ENCODE measurements at regions of chr6 and their contacts with region 1.

Region 1: DNA sequence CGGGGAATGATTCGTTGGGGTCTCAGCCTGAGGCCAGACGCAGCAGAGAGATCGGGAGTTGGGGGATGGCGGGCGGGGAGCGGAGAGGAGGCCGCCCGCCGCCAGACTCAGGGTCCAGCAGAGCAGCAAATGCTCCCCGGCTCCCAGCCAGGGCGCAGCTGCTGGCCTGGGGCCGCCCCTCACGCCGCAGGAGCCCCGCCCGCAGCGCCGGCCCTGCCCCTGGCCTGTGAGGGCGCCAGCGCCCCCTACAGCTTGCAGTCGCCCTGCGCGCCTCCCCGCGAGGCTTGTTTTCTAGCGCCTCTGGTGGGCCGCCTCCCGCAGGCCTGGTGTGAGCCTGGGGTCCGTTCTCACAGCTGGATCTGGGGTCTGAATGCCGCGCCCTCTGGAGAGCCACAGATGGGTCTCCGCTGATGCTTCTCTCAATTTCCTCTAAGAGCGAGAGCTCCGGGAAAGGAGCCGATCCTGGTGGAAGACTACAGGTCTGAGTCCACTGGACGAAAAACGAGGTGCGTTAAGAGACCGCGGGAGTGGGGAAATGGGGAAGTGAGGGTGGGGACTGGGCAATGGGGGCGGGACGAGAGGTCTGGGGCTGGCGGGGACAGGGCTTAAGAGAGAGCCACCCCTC is 29.9 kb downstream of the TRIM38 start:
- DNase-seq: peak; percentile 96
- H3K4me3 ChIP-seq: peak overlapping the region; percentile 42 to 82 (median 81)
- H3K27ac ChIP-seq: peak overlapping the region; percentile 82
- H3K4me1 ChIP-seq: peaks cover 13% of the 10 kb centered on the region
- H3K27me3 ChIP-seq: no peaks in the 10 kb centered on the region
- CTCF ChIP-seq: peak; percentile 99 to 100
- POLR2A ChIP-seq: peak; percentile 96

Region 2: GRCh38 chr6:24720604-24721460 is 1271.7 kb before region 1 on chr6:
- CTCF ChIA-PET with region 1: no interaction called
- POLR2A ChIA-PET with region 1: no interaction called
- dilution Hi-C with region 1: no loop called
- intact Hi-C with region 1: loop called (anchors 10 kb)
- DNase-seq: peak; percentile 100
- H3K4me3 ChIP-seq: peak overlapping the region; percentile 81 to 89 (median 86)
- H3K27ac ChIP-seq: peak overlapping the region; percentile 97
- H3K4me1 ChIP-seq: peaks cover 34% of the 10 kb centered on the region
- H3K27me3 ChIP-seq: no peaks in the 10 kb centered on the region
- CTCF ChIP-seq: no peak
- POLR2A ChIP-seq: peak; percentile 98

Region 3: DNA sequence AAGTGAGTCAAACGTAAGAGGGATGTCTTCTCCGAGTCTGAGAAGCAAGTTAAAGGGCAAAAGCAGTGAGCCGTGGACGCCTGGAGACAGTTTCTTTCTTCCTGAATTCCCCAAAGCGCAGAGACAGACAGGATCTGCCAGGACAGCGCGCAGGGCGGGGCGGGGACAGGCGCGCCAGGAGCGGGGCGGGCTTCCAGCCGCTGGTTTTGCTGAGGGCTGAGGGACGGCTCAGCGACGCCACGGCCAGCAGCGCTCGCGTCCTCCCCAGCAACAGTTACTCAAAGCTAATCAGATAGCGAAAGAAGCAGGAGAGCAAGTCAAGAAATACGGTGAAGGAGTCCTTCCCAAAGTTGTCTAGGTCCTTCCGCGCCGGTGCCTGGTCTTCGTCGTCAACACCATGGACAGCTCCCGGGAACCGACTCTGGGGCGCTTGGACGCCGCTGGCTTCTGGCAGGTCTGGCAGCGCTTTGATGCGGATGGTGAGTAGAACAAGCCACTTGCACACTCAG is 340.5 kb before region 1 on chr6 and contains the start of gene SCGN:
- CTCF ChIA-PET with region 1: no interaction called
- POLR2A ChIA-PET with region 1: no interaction called
- dilution Hi-C with region 1: no loop called
- intact Hi-C with region 1: no loop called
- DNase-seq: peak; percentile 52
- H3K4me3 ChIP-seq: no peak within 1 kb of the TSS
- H3K27ac ChIP-seq: no peak within 1 kb of the TSS
- H3K4me1 ChIP-seq: no peaks in the 10 kb centered on the region
- H3K27me3 ChIP-seq: peaks cover 0 to 8% of the 10 kb centered on the region in 2 experiments
- CTCF ChIP-seq: no peak
- POLR2A ChIP-seq: no peak
- total RNA-seq, gene SCGN: not detected in 2 replicates

Region 4: DNA sequence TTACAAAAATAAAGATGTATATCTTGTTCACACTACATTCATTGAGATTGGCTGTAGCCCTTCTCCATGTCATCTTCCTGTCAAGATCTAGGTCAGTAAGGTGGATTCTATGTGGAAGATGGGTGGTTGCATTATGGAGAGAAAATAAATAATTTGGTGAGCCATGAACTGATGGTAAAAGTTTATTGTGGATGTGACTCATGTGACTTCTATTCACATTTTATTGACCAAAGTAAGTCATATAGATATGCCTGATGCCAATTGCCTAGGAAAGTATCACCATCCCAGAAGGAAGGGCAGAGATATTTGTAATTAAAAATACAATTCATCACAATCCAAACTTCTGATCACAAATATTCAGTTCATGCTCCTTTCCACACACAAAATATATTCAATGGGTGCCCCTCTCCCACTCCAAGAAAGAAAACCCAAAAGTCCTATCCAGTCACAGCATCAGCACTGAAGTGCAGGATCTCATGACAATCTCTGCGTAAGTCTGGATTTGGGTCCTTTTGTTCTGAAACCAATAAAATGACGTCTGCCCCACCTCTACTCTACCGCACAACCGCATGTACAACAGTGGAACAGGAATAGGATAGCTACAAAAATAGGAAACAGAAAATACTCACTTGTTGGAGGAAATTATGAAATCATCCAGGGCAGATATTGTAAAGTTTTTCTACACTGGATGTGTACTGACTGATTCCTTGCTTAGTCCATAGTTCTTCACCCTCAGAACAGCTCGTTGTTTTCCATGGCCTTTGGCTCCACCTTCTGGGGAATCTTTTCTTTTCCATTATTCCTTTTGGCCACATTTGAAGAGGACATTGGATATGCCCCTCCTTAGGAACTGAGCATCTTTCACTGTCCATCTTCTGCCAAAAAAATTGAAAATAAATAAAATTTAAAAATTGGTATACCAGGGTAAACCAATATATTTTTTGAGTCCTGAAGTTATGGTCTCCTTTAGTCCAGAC is 102.4 kb before region 1 on chr6:
- CTCF ChIA-PET with region 1: no interaction called
- POLR2A ChIA-PET with region 1: no interaction called
- dilution Hi-C with region 1: no loop called
- intact Hi-C with region 1: loop called (anchors 5 kb)
- DNase-seq: peak; percentile 73
- H3K4me3 ChIP-seq: no peak overlapping the region
- H3K27ac ChIP-seq: no peak overlapping the region
- H3K4me1 ChIP-seq: no peaks in the 10 kb centered on the region
- H3K27me3 ChIP-seq: peaks cover 0 to 1% of the 10 kb centered on the region in 2 experiments
- CTCF ChIP-seq: peak; percentile 16 to 17
- POLR2A ChIP-seq: no peak

Region 5: GRCh38 chr6:25971187-25971811 is 21.2 kb before region 1 on chr6:
- CTCF ChIA-PET with region 1: interaction called, 15 read pairs
- POLR2A ChIA-PET with region 1: no interaction called
- dilution Hi-C with region 1: no loop called
- intact Hi-C with region 1: loop called (anchors 1 kb)
- DNase-seq: peak; percentile 90
- H3K4me3 ChIP-seq: peak overlapping the region in 1 of 3 experiments; percentile 23
- H3K27ac ChIP-seq: peak overlapping the region; percentile 89
- H3K4me1 ChIP-seq: peaks cover 25% of the 10 kb centered on the region
- H3K27me3 ChIP-seq: no peaks in the 10 kb centered on the region
- CTCF ChIP-seq: no peak
- POLR2A ChIP-seq: no peak

Region 6: DNA sequence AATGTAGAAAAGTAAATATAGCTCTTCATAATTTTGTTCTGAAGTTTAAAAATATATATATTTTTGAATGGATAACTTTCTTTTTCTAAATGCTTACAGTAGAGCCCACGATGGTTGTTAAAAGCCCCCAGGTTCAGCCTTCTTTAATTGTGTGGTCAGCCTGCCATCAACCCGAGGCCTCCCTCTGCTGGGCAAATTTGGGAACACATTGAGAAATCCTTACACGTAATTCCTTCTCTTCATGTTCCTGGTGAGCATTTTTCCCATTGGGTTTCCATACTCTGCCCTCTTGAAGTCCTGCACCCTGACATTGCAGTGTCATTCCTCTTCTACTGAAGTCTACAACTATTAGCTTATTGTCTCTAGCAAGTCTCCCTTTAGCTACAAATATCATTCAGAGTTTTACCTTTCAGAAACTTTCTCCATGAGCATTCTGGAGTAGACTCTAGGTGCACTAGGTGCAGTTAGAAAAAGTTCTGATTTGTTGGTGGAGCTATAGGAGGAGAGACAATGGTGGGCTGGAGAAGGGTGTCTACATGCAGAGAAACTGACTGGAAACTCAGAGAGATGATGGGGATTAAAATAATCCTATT is 10.7 kb after region 1 on chr6:
- CTCF ChIA-PET with region 1: interaction called, 31 read pairs
- POLR2A ChIA-PET with region 1: interaction called, 4 read pairs
- dilution Hi-C with region 1: no loop called
- intact Hi-C with region 1: no loop called
- DNase-seq: peak; percentile 74
- H3K4me3 ChIP-seq: no peak overlapping the region
- H3K27ac ChIP-seq: no peak overlapping the region
- H3K4me1 ChIP-seq: no peaks in the 10 kb centered on the region
- H3K27me3 ChIP-seq: no peaks in the 10 kb centered on the region
- CTCF ChIP-seq: peak; percentile 73 to 76
- POLR2A ChIP-seq: no peak

Region 7: GRCh38 chr6:26025894-26026832 is 33.6 kb after region 1 on chr6:
- CTCF ChIA-PET with region 1: interaction called, 13 read pairs
- POLR2A ChIA-PET with region 1: interaction called, 29 read pairs
- dilution Hi-C with region 1: no loop called
- intact Hi-C with region 1: no loop called
- DNase-seq: peak; percentile 96
- H3K4me3 ChIP-seq: peak overlapping the region; percentile 1 to 59 (median 55)
- H3K27ac ChIP-seq: peak overlapping the region; percentile 95
- H3K4me1 ChIP-seq: peaks cover 18% of the 10 kb centered on the region
- H3K27me3 ChIP-seq: no peaks in the 10 kb centered on the region
- CTCF ChIP-seq: peak; percentile 89
- POLR2A ChIP-seq: no peak

Region 8: GRCh38 chr6:26054857-26055669 is 62.5 kb after region 1 on chr6:
- CTCF ChIA-PET with region 1: no interaction called
- POLR2A ChIA-PET with region 1: no interaction called
- dilution Hi-C with region 1: no loop called
- intact Hi-C with region 1: no loop called
- DNase-seq: peak; percentile 94
- H3K4me3 ChIP-seq: peak overlapping the region; percentile 62 to 74 (median 65)
- H3K27ac ChIP-seq: peak overlapping the region; percentile 98
- H3K4me1 ChIP-seq: peaks cover 13% of the 10 kb centered on the region
- H3K27me3 ChIP-seq: no peaks in the 10 kb centered on the region
- CTCF ChIP-seq: no peak
- POLR2A ChIP-seq: peak; percentile 98

Region 9: GRCh38 chr6:26103770-26104456 is 111.4 kb after region 1 on chr6:
- CTCF ChIA-PET with region 1: no interaction called
- POLR2A ChIA-PET with region 1: no interaction called
- dilution Hi-C with region 1: no loop called
- intact Hi-C with region 1: no loop called
- DNase-seq: peak; percentile 97
- H3K4me3 ChIP-seq: peak overlapping the region; percentile 32 to 46 (median 34)
- H3K27ac ChIP-seq: peak overlapping the region; percentile 87
- H3K4me1 ChIP-seq: peaks cover 18% of the 10 kb centered on the region
- H3K27me3 ChIP-seq: peaks cover 0 to 4% of the 10 kb centered on the region in 2 experiments
- CTCF ChIP-seq: peak; percentile 31 to 57
- POLR2A ChIP-seq: peak; percentile 99

Region 10: DNA sequence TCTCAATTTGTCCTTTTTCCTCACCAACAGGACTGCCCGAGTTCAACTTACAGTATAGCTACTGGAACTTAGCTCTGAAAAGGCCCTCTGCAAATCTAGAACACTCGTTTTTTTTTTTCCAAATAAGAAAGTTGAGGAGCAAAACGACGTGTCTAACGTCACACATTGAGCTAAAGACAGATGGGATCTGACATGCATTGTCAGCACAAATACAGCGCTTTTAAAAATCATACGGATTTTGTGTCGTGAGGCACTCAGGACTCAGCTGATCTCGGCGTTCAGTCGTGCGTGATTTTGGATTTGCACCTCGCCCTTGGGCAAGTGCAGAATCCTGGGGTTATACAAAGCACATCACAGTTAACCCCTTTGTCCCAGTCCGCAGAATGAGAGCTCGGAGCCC is 761.7 kb after region 1 on chr6:
- CTCF ChIA-PET with region 1: no interaction called
- POLR2A ChIA-PET with region 1: no interaction called
- dilution Hi-C with region 1: no loop called
- intact Hi-C with region 1: no loop called
- DNase-seq: no peak
- H3K4me3 ChIP-seq: no peak overlapping the region
- H3K27ac ChIP-seq: no peak overlapping the region
- H3K4me1 ChIP-seq: no peaks in the 10 kb centered on the region
- H3K27me3 ChIP-seq: peaks cover 14 to 22% of the 10 kb centered on the region in 2 experiments
- CTCF ChIP-seq: no peak
- POLR2A ChIP-seq: no peak

Measured in endothelial cell of umbilical vein (primary cell).